Activated naive CD8-positive, alpha-beta T cell treated with anti-CD3 and anti-CD28 coated beads, Interleukin-2, amount 10 ng/mL, durations not matched to agents 7 days and 5 days (primary cell): ENCODE measurements at regions of chr13 and their contacts with region 1.

Region 1: GRCh38 chr13:99200432-99201167 is at the start of gene UBAC2:
- DNase-seq: peak; percentile 99
- ATAC-seq: peak; percentile 84
- H3K4me3 Mint-ChIP-seq: peak within 1 kb of the TSS; percentile 98
- H3K27ac Mint-ChIP-seq: peak within 1 kb of the TSS; percentile 99
- H3K4me1 Mint-ChIP-seq: peaks cover 50% of the 10 kb centered on the region
- H3K27me3 Mint-ChIP-seq: no peaks in the 10 kb centered on the region
- total RNA-seq, gene UBAC2: 79.1 to 80.8 TPM

Region 2: GRCh38 chr13:99087096-99087953 is 113.3 kb before region 1 on chr13:
- POLR2A ChIA-PET with region 1: interaction called, 12 read pairs
- DNase-seq: peak; percentile 96
- ATAC-seq: peak; percentile 86
- H3K4me3 Mint-ChIP-seq: peak overlapping the region; percentile 94
- H3K27ac Mint-ChIP-seq: peak overlapping the region; percentile 94
- H3K4me1 Mint-ChIP-seq: peaks cover 34% of the 10 kb centered on the region
- H3K27me3 Mint-ChIP-seq: no peaks in the 10 kb centered on the region

Region 3: GRCh38 chr13:99123101-99124045 is 77.2 kb before region 1 on chr13:
- POLR2A ChIA-PET with region 1: no interaction called
- DNase-seq: no peak
- ATAC-seq: no peak
- H3K4me3 Mint-ChIP-seq: no peak overlapping the region
- H3K27ac Mint-ChIP-seq: no peak overlapping the region
- H3K4me1 Mint-ChIP-seq: peaks cover 19% of the 10 kb centered on the region
- H3K27me3 Mint-ChIP-seq: no peaks in the 10 kb centered on the region

Region 4: DNA sequence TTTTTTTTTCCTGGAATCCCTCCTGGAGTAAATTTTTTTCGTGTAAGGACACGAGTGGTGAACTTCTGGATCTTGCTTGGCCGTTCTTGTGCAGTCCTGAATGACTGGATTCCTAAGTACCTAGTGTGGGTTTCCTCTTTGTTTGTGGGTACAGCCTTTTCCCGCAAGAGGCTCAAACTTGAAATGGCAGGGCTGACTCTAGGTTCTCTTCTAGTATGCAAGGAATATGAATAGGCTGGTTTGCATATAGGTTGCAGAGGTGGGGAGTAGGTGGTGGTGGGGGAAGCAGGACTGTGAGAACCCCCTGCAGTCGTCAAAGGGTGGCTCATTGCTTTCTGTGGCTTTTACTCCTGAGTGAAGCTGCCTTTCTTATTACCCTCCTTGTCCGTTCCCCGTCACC is 13.6 kb after region 1 on chr13:
- POLR2A ChIA-PET with region 1: interaction called, 158 read pairs
- DNase-seq: peak; percentile 25
- ATAC-seq: peak; percentile 17
- H3K4me3 Mint-ChIP-seq: peak overlapping the region; percentile 85
- H3K27ac Mint-ChIP-seq: peak overlapping the region; percentile 92
- H3K4me1 Mint-ChIP-seq: peaks cover 62% of the 10 kb centered on the region
- H3K27me3 Mint-ChIP-seq: no peaks in the 10 kb centered on the region

Region 5: GRCh38 chr13:99227909-99228688 is 27.5 kb after region 1 on chr13:
- POLR2A ChIA-PET with region 1: interaction called, 13 read pairs
- DNase-seq: no peak
- ATAC-seq: no peak
- H3K4me3 Mint-ChIP-seq: peak overlapping the region; percentile 85
- H3K27ac Mint-ChIP-seq: peak overlapping the region; percentile 89
- H3K4me1 Mint-ChIP-seq: peaks cover 68% of the 10 kb centered on the region
- H3K27me3 Mint-ChIP-seq: no peaks in the 10 kb centered on the region

Region 6: GRCh38 chr13:99237981-99238662 is 37.5 kb after region 1 on chr13:
- POLR2A ChIA-PET with region 1: interaction called, 15 read pairs
- DNase-seq: no peak
- ATAC-seq: peak; percentile 85
- H3K4me3 Mint-ChIP-seq: peak overlapping the region; percentile 89
- H3K27ac Mint-ChIP-seq: peak overlapping the region; percentile 97
- H3K4me1 Mint-ChIP-seq: peaks cover 41% of the 10 kb centered on the region
- H3K27me3 Mint-ChIP-seq: no peaks in the 10 kb centered on the region

Region 7: DNA sequence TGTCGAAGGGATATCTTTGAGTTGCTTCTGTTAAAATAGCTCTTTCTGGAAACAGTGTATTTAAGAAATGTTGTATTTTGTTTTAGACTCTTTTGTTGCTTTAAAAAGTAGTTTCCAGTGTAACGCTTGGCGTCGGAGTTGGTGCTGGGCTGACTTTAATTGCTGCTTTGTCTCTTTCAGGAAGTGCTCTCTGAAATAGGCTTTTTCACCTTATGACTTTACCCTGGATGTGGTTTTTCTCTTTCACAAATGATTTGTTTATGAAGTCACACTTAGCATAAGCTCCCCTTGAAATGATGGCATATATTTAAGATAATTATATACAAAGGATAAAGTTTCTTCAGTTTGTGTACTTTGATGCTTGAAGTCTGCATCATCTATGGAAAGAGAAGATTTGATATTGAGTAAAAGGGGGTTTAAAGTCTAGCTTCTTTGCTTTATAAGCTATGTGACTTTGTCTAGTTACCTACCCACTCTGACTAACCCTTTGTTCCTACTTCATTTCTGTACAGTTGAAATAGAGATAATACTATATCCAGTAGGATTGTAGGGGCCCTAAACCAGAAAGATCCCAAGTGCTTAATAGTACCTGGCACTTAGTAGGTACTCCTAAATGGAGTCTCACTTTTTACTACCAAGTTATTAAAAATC is 57.7 kb after region 1 on chr13 and contains the start of gene GPR18:
- POLR2A ChIA-PET with region 1: interaction called, 106 read pairs
- DNase-seq: no peak
- ATAC-seq: peak; percentile 87
- H3K4me3 Mint-ChIP-seq: peak within 1 kb of the TSS; percentile 90
- H3K27ac Mint-ChIP-seq: peak within 1 kb of the TSS; percentile 94
- H3K4me1 Mint-ChIP-seq: peaks cover 48% of the 10 kb centered on the region
- H3K27me3 Mint-ChIP-seq: no peaks in the 10 kb centered on the region
- total RNA-seq, gene GPR18: 25.5 to 25.9 TPM

Region 8: GRCh38 chr13:99269627-99270241 is 69.1 kb after region 1 on chr13:
- POLR2A ChIA-PET with region 1: interaction called, 37 read pairs
- DNase-seq: no peak
- ATAC-seq: peak; percentile 66
- H3K4me3 Mint-ChIP-seq: no peak overlapping the region
- H3K27ac Mint-ChIP-seq: no peak overlapping the region
- H3K4me1 Mint-ChIP-seq: peaks cover 43% of the 10 kb centered on the region
- H3K27me3 Mint-ChIP-seq: no peaks in the 10 kb centered on the region